Pancreas (tissue), 10 donors: ENCODE measurements at regions of chr2 and their contacts with region 1.

Region 1: GRCh38 chr2:61538200-61538919 is at the start of gene XPO1:
- DNase-seq: peak; percentile 98 to 100 (median 99)
- ATAC-seq: peak; percentile 86 to 94 (median 90)
- H3K4me3 ChIP-seq: peak within 1 kb of the TSS; percentile 36 to 65 (median 49)
- H3K27ac ChIP-seq: peak within 1 kb of the TSS; percentile 94 to 97 (median 96)
- H3K4me1 ChIP-seq: peaks cover 10 to 28% (median 13%) of the 10 kb centered on the region in 3 donors
- H3K27me3 ChIP-seq: no peaks in the 10 kb centered on the region
- CTCF ChIP-seq: no peak
- total RNA-seq, gene XPO1: 22.7 to 71.3 (median 38.0) TPM

Region 2: DNA sequence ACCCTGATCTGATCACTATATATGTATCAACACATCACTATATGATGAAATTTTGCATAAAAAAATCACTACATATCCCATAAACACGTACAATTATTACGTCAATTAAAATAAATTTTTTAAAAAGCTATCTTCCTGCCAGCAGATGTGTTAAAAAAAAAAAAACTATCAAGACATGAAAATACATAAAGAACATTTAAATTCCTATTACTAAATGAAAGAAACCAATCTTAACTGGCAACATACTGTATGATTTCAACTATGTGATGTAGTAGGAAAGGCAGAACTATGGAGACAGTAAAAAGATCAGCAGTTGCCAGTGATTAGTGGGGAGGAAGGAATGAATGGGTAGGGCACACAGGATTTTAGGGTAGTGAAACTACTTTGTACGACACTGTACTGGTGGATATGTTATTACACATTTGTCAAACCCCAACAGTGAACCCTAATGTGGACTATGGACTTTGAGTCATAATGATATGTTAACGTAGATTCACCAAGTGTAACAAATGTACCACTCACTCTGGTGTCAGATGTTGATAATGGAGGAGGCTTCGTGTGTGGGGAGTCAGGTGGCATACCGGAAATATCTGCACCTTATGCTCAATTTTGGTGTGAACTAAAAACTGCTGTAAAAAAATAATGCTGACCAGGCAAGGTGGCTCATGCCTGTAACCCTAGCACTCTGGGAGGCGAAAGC is 94.9 kb before region 1 on chr2:
- intact Hi-C with region 1: no loop called
- DNase-seq: no peak
- ATAC-seq: peak in 3 of 4 donors; percentile 70 to 87 (median 73)
- H3K4me3 ChIP-seq: no peak overlapping the region
- H3K27ac ChIP-seq: no peak overlapping the region
- H3K4me1 ChIP-seq: peaks cover 0 to 13% (median 11%) of the 10 kb centered on the region in 3 donors
- H3K27me3 ChIP-seq: no peaks in the 10 kb centered on the region
- CTCF ChIP-seq: no peak

Region 3: GRCh38 chr2:61470965-61471904 is 67.1 kb before region 1 on chr2 and contains the start of gene USP34:
- intact Hi-C with region 1: loop called in 1 of 3 experiments (anchors 10 kb)
- DNase-seq: peak; percentile 93 to 96 (median 96)
- ATAC-seq: peak; percentile 91 to 96 (median 92)
- H3K4me3 ChIP-seq: peak within 1 kb of the TSS; percentile 66 to 89 (median 85)
- H3K27ac ChIP-seq: peak within 1 kb of the TSS; percentile 88 to 98 (median 95)
- H3K4me1 ChIP-seq: peaks cover 2 to 20% (median 12%) of the 10 kb centered on the region in 3 donors
- H3K27me3 ChIP-seq: no peaks in the 10 kb centered on the region
- CTCF ChIP-seq: no peak
- total RNA-seq, gene USP34: 30.0 to 58.9 (median 45.1) TPM